ENCODE measurements at regions of chr3 and their contacts with region 1.

Region 1: DNA sequence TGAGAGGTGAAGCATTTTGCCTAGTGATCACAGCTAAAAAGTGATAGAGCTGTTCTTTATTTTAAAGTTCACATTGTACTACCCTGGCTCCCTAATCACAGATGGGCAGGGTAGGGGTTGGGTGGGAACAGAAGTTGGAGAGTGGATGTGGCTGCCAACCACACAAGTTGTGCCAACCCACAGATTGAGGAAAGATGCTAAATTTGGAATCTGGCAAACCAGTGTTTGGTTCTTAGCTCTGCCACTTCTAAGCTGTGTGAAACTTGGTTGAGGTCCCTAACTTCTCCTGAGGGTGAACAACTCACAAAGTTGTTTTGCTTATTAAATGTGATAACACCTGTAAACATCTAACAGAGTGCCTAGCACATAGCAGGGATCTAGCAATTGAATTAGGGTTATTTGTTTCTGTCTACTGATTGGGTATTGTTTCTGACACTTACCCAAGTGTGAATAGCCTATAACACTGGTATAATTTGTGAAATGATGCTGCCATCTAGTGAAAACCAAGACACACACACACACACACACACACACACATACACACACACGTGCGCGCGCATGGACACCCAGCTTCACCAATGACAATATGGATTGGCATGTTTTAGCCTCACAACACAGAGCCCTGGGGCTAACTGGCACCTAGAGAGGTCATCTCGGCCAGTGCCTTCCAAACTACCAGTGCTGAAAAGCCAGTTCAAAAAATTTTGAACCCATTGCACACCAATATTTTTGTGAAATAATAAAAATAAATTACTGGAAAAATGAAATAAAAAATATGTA is 25.3 kb downstream of the ADGRG7 start:
- DNase-seq: peak; percentile 31
- ATAC-seq: peak; percentile 92
- H3K4me3 ChIP-seq: no peak overlapping the region
- H3K27ac ChIP-seq: no peak overlapping the region
- H3K4me1 ChIP-seq: no peaks in the 10 kb centered on the region
- H3K27me3 ChIP-seq: no peaks in the 10 kb centered on the region
- CTCF ChIP-seq: peak; percentile 12 to 56 (median 17); a peak in 2 of 6 replicates
- EP300 ChIP-seq: no peak
- POLR2A ChIP-seq: no peak
- RAD21 ChIP-seq: peak; percentile 31; the same call in 1 of the 2 replicates

Region 2: DNA sequence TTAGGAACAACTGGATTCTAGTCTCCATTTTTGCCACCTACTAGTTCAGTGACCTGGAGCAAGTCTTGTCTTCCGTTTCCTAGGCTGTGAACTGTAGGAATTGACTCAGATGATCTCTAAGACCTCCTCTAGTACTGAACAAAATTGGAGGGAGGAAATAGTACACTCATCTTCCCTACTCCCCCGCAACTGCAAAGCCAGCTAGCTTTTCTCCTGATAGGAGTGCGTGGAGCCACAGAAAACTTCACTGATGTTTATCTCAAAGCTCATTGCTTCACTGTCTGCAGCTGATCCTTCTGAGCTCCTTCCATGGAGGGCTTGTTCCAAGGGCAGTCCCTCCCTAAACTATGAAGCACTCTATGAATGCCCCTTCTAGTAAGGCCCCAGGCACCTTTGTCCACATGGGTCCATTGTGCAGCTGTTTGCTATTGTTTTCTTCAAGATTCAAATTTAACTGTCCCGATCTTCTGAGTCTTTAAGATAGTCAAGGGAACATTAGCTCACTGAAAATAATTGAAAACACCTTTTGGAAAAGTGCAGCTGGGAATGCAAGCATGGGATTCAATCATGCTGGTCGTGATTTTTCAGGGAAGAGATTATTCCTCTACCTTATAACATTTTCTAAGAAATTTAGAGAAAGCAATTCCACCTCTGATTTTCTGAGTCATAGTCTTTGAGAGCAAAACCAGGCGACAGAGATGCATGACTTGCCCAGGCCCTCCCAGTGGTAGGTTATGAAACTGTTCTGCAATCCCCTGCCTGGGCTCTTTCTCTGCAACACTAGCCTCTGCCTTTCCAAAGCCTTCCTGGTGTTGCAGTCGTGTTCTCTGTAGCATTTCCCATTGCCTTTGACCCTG is 544.6 kb before region 1 on chr3:
- CTCF ChIA-PET with region 1: no interaction called
- POLR2A ChIA-PET with region 1: no interaction called
- RAD21 ChIA-PET with region 1: no interaction called
- SMC1A ChIA-PET with region 1: no interaction called
- in situ Hi-C with region 1: no loop called
- intact Hi-C with region 1: no loop called
- DNase-seq: no peak
- ATAC-seq: peak; percentile 90
- H3K4me3 ChIP-seq: no peak overlapping the region
- H3K27ac ChIP-seq: no peak overlapping the region
- H3K4me1 ChIP-seq: peaks cover 18% of the 10 kb centered on the region
- H3K27me3 ChIP-seq: no peaks in the 10 kb centered on the region
- CTCF ChIP-seq: peak; percentile 32 to 73 (median 72)
- EP300 ChIP-seq: no peak
- POLR2A ChIP-seq: no peak
- RAD21 ChIP-seq: peak; percentile 67

Region 3: GRCh38 chr3:100316641-100317069 is 318.0 kb before region 1 on chr3:
- CTCF ChIA-PET with region 1: interaction called, 30 read pairs
- POLR2A ChIA-PET with region 1: interaction called, 4 read pairs
- RAD21 ChIA-PET with region 1: interaction called, 15 read pairs
- SMC1A ChIA-PET with region 1: interaction called, 15 read pairs
- in situ Hi-C with region 1: no loop called
- intact Hi-C with region 1: loop called (anchors 1 kb)
- DNase-seq: no peak
- ATAC-seq: peak; percentile 80
- H3K4me3 ChIP-seq: no peak overlapping the region
- H3K27ac ChIP-seq: no peak overlapping the region
- H3K4me1 ChIP-seq: peaks cover 3% of the 10 kb centered on the region; the same call in 1 of the 2 replicates
- H3K27me3 ChIP-seq: no peaks in the 10 kb centered on the region
- CTCF ChIP-seq: peak; percentile 66 to 67 (median 67)
- EP300 ChIP-seq: no peak
- POLR2A ChIP-seq: no peak
- RAD21 ChIP-seq: peak; percentile 81

Measured in GM12878 (cell line).